Caco-2 (cell line): ENCODE measurements at regions of chr6 and their contacts with region 1.

Region 1: DNA sequence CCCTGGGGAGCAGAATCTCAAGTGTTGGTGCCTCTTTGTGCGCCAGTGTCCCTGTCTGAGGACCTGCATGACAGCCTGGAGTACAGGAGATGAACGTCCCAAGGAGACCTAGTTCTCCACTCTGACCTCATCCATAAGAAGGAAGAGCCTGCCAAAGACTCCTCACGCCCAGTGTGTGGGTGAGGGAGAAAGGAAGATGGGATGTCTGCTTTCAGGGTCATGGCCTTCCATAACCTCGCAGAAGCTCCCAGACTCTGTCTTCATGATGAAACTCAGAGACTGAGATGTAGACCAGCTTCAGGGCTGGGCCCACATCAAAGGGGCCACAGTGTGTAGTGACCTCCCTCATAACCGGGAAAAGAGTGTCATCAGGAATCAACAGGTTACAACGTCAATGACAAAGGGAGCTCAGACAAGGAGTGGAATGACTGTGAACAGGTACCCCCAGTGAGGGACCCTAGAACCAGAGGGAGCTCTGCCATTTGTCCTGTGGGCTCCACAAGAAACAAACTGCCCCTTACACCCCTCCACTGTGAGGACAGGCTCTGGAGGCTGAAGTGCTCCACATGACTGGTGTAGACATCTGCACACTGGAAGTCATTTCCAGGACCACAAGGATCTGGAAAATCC is 8.1 kb downstream of the HLA-DQB1 start:
- DNase-seq: no peak
- H3K4me3 ChIP-seq: no peak overlapping the region
- H3K4me3 Mint-ChIP-seq: no peak overlapping the region
- H3K27ac Mint-ChIP-seq: no peak overlapping the region
- H3K4me1 ChIP-seq: no peaks in the 10 kb centered on the region
- H3K4me1 Mint-ChIP-seq: no peaks in the 10 kb centered on the region
- H3K27me3 ChIP-seq: no peaks in the 10 kb centered on the region
- H3K27me3 Mint-ChIP-seq: peaks cover 3% of the 10 kb centered on the region
- CTCF ChIP-seq: no peak

Region 2: GRCh38 chr6:32752580-32752979 is 94.2 kb after region 1 on chr6:
- CTCF ChIA-PET with region 1: no interaction called
- POLR2A ChIA-PET with region 1: no interaction called
- intact Hi-C with region 1: loop called (anchors 5 kb)
- DNase-seq: no peak
- H3K4me3 ChIP-seq: no peak overlapping the region
- H3K4me3 Mint-ChIP-seq: no peak overlapping the region
- H3K27ac Mint-ChIP-seq: no peak overlapping the region
- H3K4me1 ChIP-seq: no peaks in the 10 kb centered on the region
- H3K4me1 Mint-ChIP-seq: no peaks in the 10 kb centered on the region
- H3K27me3 ChIP-seq: no peaks in the 10 kb centered on the region; the same call in none of the 2 replicates
- H3K27me3 Mint-ChIP-seq: peaks cover 25% of the 10 kb centered on the region
- CTCF ChIP-seq: no peak

Region 3: GRCh38 chr6:32816746-32817204 is 158.4 kb after region 1 on chr6 and contains the start of gene HLA-DOB:
- CTCF ChIA-PET with region 1: no interaction called
- POLR2A ChIA-PET with region 1: no interaction called
- intact Hi-C with region 1: no loop called
- DNase-seq: peak in 1 of 2 experiments; percentile 21
- H3K4me3 ChIP-seq: no peak within 1 kb of the TSS
- H3K4me3 Mint-ChIP-seq: no peak within 1 kb of the TSS
- H3K27ac Mint-ChIP-seq: no peak within 1 kb of the TSS
- H3K4me1 ChIP-seq: peaks cover 13% of the 10 kb centered on the region; the same call in 1 of the 2 replicates
- H3K4me1 Mint-ChIP-seq: no peaks in the 10 kb centered on the region
- H3K27me3 ChIP-seq: no peaks in the 10 kb centered on the region
- H3K27me3 Mint-ChIP-seq: peaks cover 8% of the 10 kb centered on the region
- CTCF ChIP-seq: no peak
- total RNA-seq, gene HLA-DOB: 0.61 and 0.65 TPM in 2 replicates